Activated CD4-positive, alpha-beta T cell treated with anti-CD3 and anti-CD28 coated beads, Interleukin-2, amount 10 ng/mL, durations not matched to agents 24 days and 14 days (primary cell): ENCODE measurements at regions of chr10 and their contacts with region 1.

Region 1: GRCh38 chr10:90530521-90530920 is 327.3 kb downstream of the HTR7 start:
- DNase-seq: no peak
- H3K4me3 Mint-ChIP-seq: no peak overlapping the region
- H3K27ac Mint-ChIP-seq: no peak overlapping the region
- H3K4me1 Mint-ChIP-seq: no peaks in the 10 kb centered on the region
- H3K27me3 Mint-ChIP-seq: no peaks in the 10 kb centered on the region

Region 2: GRCh38 chr10:90579602-90580242 is 49.2 kb after region 1 on chr10:
- intact Hi-C with region 1: loop called (anchors 1 kb)
- DNase-seq: no peak
- H3K4me3 Mint-ChIP-seq: no peak overlapping the region
- H3K27ac Mint-ChIP-seq: no peak overlapping the region
- H3K4me1 Mint-ChIP-seq: no peaks in the 10 kb centered on the region
- H3K27me3 Mint-ChIP-seq: no peaks in the 10 kb centered on the region

Region 3: DNA sequence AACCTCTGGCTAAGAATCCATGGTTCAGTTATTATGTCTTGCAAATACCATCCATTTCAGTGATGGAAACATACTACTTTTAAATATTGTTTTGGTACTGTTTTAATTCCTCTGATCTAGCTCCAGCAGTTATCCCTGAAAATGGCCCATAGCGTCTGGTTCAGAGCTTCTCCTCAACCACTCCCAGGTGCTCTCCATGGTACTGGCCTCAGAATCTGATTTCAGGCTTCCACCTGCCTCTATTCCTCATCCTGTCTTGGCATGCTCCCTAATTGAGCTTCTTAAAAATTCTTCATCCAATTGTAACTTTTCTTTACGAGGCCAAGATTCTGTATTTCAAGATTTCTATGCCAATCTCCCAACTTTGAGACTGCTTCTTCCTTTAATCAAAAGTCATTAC is 91.1 kb after region 1 on chr10:
- intact Hi-C with region 1: no loop called
- DNase-seq: no peak
- H3K4me3 Mint-ChIP-seq: no peak overlapping the region
- H3K27ac Mint-ChIP-seq: no peak overlapping the region
- H3K4me1 Mint-ChIP-seq: no peaks in the 10 kb centered on the region
- H3K27me3 Mint-ChIP-seq: no peaks in the 10 kb centered on the region

Region 4: GRCh38 chr10:90709727-90710126 is 179.2 kb after region 1 on chr10:
- intact Hi-C with region 1: no loop called
- DNase-seq: no peak
- H3K4me3 Mint-ChIP-seq: no peak overlapping the region
- H3K27ac Mint-ChIP-seq: no peak overlapping the region
- H3K4me1 Mint-ChIP-seq: no peaks in the 10 kb centered on the region
- H3K27me3 Mint-ChIP-seq: peaks cover 5% of the 10 kb centered on the region